ENCODE measurements at regions of chr14 and their contacts with region 1.

Region 1: DNA sequence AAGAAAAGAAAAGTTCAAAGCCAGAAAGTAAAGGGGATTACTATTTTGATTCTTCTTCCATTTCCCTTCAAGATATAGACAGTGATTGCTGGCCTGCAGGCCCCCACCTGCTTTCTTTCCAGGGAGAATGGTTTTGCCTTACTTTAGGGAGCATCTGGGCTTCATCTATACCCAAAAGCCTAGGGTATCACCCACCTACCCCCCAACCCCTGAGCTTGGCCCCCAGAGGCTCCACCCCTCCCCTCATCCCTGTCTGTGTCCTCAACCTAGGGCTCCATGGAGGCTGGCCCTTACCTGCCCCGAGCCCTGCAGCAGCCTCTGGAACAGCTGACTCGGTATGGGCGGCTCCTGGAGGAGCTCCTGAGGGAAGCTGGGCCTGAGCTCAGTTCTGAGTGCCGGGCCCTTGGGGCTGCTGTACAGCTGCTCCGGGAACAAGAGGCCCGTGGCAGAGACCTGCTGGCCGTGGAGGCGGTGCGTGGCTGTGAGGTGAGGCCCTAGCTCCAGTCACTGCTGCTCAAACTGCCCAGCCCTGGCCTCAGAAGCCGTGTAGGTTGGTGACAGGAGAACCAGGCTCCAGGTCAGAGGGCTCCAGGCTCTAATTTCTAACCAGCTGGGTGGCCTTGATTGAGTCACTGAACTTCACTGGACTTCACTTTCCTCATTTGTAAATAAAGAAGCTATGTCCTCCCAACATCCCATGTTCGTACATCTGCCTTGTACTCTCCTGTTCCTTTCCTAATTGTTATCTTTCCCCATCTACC is 13.6 kb downstream of the ARHGEF40 start:
- DNase-seq: no peak
- ATAC-seq: no peak
- H3K4me3 ChIP-seq: no peak overlapping the region
- H3K27ac ChIP-seq: no peak overlapping the region
- H3K4me1 ChIP-seq: no peaks in the 10 kb centered on the region
- H3K27me3 ChIP-seq: no peaks in the 10 kb centered on the region
- CTCF ChIP-seq: no peak

Region 2: GRCh38 chr14:20997115-20997514 is 86.6 kb before region 1 on chr14:
- CTCF ChIA-PET with region 1: interaction called, 14 read pairs
- POLR2A ChIA-PET with region 1: no interaction called
- in situ Hi-C with region 1: no loop called
- intact Hi-C with region 1: no loop called
- DNase-seq: no peak
- ATAC-seq: no peak
- H3K4me3 ChIP-seq: no peak overlapping the region
- H3K27ac ChIP-seq: no peak overlapping the region
- H3K4me1 ChIP-seq: no peaks in the 10 kb centered on the region
- H3K27me3 ChIP-seq: no peaks in the 10 kb centered on the region
- CTCF ChIP-seq: no peak

Measured in Panc1 (cell line).